ENCODE measurements at regions of chr9 and their contacts with region 1.

Region 1: DNA sequence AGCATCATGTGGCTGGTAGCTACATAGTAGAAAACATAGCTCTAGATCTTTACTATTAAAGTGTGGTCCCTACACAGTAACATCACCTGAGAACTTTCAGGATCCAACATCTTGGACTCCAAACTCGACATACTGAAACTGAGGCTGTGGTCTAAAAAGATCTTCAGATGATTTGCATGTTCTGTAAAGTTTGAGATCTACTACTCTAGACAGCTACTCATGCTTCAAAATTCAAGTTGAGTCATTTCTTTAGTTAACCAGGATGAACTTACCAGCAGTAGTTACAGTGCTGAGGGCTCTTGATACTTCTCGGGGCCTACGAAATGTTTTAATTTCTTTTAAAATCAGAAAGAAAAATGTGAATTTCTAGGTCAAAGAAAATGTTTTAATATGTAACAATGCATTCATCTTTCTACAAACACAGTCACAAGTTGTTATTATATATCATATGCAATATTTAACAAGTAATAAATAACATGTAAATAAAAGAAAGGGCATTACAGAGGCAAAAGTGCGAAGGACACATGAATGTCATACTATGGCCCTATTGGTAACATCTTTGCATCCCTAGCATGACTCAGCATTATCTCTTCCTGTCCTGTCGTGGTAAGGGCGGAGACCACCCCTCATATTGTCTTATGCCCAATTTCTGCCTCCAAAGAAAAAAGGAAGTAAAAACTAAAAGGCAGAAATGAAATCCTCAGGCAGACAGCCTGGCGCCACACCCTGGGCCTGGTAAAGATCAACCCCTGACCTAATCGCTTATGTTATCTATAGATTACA is 563.9 kb upstream of the TLE4 start:
- DNase-seq: peak; percentile 35
- ATAC-seq: peak; percentile 48
- H3K4me3 ChIP-seq: no peak overlapping the region
- H3K27ac ChIP-seq: no peak overlapping the region
- H3K4me1 ChIP-seq: peaks cover 11% of the 10 kb centered on the region
- H3K27me3 ChIP-seq: no peaks in the 10 kb centered on the region
- CTCF ChIP-seq: no peak
- EP300 ChIP-seq: no peak
- POLR2A ChIP-seq: no peak
- RAD21 ChIP-seq: no peak

Region 2: GRCh38 chr9:78958892-78959291 is 49.0 kb before region 1 on chr9:
- CTCF ChIA-PET with region 1: no interaction called
- POLR2A ChIA-PET with region 1: no interaction called
- RAD21 ChIA-PET with region 1: no interaction called
- SMC1A ChIA-PET with region 1: no interaction called
- in situ Hi-C with region 1: loop called (anchors 5 kb)
- intact Hi-C with region 1: no loop called
- DNase-seq: no peak
- ATAC-seq: no peak
- H3K4me3 ChIP-seq: no peak overlapping the region
- H3K27ac ChIP-seq: no peak overlapping the region
- H3K4me1 ChIP-seq: no peaks in the 10 kb centered on the region
- H3K27me3 ChIP-seq: no peaks in the 10 kb centered on the region
- CTCF ChIP-seq: peak in 1 of 3 experiments; percentile 7; a peak in 1 of 6 replicates
- EP300 ChIP-seq: no peak
- POLR2A ChIP-seq: no peak
- RAD21 ChIP-seq: no peak